GM10248 (cell line): ENCODE measurements at regions of chr6 and their contacts with region 1.

Region 1: DNA sequence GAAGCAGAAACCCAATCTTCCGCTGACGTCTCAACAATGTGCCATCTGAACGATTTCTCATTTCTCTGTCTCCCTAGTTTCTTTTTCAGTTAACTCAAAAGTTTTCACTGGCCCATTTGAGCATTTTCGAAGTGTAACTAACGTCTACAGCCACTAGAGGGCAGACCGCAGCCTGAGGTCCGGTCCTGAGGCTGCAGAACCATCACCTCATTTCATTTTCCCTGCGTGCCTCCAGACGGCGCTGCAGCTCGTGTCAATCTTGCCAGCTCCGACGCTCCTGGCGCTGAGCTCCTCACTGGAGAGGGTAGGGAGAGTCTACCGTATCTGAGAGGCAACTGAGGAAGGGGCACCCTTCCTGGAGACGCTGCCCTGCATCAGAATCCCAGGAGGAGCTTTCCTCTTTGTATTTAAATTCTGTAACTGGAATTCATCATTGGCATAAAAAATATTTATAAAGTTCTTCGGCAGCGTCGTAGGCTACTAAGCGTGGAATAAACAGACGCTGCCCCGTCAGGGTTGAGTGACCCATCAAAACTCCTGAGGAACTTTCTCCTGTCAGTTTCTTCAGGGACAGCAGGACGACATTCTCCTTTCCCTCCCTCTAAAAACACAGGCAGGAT is 28.5 kb upstream of the DTNBP1 start:
- DNase-seq: peak; percentile 88
- CTCF ChIP-seq: peak; percentile 99

Region 2: GRCh38 chr6:15708231-15708630 is 16.9 kb after region 1 on chr6:
- CTCF ChIA-PET with region 1: interaction called, 27 read pairs
- POLR2A ChIA-PET with region 1: no interaction called
- DNase-seq: no peak
- CTCF ChIP-seq: no peak

Region 3: GRCh38 chr6:16128759-16129622 is 437.6 kb after region 1 on chr6 and contains the start of gene MYLIP:
- CTCF ChIA-PET with region 1: interaction called, 37 read pairs
- POLR2A ChIA-PET with region 1: interaction called, 4 read pairs
- DNase-seq: peak; percentile 98
- CTCF ChIP-seq: peak; percentile 95

Region 4: DNA sequence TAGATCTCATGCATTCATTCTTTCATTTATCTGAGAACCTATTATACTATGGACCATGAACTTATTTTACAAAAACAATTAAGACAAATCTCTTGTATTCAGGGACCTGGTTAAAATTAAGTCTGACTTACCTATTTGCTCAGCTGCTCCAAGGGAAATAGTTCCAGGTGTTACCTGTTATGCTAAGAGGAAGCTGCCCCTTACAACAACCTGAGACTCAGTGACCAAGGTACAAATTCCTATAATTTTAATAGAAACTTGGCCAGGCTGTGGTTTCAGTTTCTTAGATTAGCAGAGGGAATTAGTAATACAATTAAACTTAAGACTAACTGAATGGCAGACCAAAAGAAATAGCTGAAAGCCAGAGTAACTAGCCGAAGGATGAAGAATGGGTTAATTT is 498.9 kb after region 1 on chr6:
- CTCF ChIA-PET with region 1: interaction called, 16 read pairs
- POLR2A ChIA-PET with region 1: no interaction called
- DNase-seq: no peak
- CTCF ChIP-seq: no peak

Region 5: DNA sequence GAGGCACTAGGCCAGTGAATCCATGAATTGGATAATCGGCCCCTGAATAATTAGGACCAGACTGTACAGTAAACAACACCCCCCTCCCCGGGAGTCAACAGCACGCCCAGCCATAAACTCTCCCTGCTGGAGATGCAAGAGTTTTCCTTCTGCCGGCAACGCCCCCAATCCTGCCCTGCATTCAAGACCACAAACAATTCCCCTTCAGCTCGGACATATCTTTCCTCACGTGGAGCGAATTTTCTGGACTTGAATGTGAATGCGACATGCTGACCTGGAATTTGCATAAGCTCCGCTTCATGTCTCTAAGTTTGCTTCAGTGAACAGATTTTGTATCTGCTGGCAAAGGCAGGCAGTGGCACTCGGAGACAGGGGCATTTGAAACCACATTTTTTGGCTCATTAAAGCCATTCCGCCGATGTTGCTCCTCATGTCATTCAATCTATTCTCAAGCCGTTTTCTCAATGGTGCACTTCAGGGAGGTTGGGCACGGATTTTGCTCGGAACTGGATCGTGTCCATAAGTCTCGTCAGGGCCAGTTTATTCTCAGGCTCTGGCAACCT is 509.0 kb after region 1 on chr6:
- CTCF ChIA-PET with region 1: interaction called, 96 read pairs
- POLR2A ChIA-PET with region 1: interaction called, 8 read pairs
- DNase-seq: no peak
- CTCF ChIP-seq: no peak

Region 6: DNA sequence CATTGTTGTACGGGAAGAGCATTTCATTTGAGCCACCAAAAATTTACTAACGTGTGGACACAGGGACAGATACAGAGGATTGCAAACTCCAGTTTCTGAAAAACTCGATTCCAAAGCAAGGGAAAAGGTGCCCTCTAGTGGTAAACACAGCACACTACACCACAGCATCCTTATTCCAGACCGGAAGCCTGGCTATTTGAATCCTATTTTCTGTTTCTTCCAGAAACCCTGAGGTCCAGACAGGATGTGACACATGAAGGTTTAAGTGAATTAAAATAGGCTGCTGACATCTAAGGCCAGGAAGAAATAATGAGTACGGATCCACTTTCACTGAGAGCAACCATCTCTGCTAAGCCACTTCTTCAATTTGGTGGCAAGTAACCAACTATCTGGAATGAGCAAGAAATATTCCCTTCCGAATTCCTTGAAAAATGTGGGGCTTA is 515.3 kb after region 1 on chr6:
- CTCF ChIA-PET with region 1: interaction called, 96 read pairs
- POLR2A ChIA-PET with region 1: no interaction called
- DNase-seq: peak; percentile 68
- CTCF ChIP-seq: peak; percentile 88